Mammary epithelial cell (primary cell): ENCODE measurements at regions of chr12 and their contacts with region 1.

Region 1: GRCh38 chr12:68317047-68317667 is 15.0 kb downstream of the MDM1 start:
- DNase-seq: no peak
- H3K4me3 ChIP-seq: no peak overlapping the region
- H3K27ac ChIP-seq: no peak overlapping the region
- H3K4me1 ChIP-seq: no peaks in the 10 kb centered on the region
- H3K27me3 ChIP-seq: no peaks in the 10 kb centered on the region
- CTCF ChIP-seq: peak; percentile 55 to 57

Region 2: DNA sequence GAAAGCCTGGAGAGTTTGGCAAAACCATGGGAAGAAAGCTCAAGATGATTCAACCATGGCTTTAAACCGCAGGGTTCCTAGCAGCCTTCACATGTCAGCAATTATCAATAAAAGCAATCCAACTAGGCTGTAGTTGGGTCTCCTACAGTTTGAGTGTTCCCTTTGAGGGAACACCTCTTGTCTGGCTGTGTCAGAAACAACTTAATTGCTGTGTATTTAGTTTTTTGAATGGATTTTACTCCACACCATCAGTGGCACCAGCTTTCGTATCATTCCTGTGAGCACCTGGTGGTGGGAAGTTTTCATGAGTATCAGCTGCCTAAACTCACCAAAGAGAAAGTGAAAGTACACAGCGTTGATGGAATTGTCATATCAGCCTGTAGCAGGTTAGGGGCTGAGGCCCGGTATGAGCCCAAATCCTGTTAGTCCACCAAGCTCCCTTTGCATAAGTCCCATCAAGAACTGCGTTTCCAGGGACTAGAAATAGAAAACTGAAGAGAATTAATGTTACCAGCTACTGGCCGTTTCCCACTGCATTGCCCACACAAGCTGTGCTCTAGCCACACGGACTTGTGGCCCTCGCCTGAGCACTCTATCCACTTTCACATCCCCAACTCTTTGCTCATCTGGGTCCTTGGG is 80.6 kb before region 1 on chr12:
- CTCF ChIA-PET with region 1: no interaction called
- dilution Hi-C with region 1: no loop called
- in situ Hi-C with region 1: loop called in 1 of 2 experiments (anchors 5 kb)
- intact Hi-C with region 1: loop called (anchors 1 kb)
- DNase-seq: peak; percentile 40
- H3K4me3 ChIP-seq: no peak overlapping the region
- H3K27ac ChIP-seq: no peak overlapping the region
- H3K4me1 ChIP-seq: no peaks in the 10 kb centered on the region
- H3K27me3 ChIP-seq: no peaks in the 10 kb centered on the region
- CTCF ChIP-seq: no peak

Region 3: DNA sequence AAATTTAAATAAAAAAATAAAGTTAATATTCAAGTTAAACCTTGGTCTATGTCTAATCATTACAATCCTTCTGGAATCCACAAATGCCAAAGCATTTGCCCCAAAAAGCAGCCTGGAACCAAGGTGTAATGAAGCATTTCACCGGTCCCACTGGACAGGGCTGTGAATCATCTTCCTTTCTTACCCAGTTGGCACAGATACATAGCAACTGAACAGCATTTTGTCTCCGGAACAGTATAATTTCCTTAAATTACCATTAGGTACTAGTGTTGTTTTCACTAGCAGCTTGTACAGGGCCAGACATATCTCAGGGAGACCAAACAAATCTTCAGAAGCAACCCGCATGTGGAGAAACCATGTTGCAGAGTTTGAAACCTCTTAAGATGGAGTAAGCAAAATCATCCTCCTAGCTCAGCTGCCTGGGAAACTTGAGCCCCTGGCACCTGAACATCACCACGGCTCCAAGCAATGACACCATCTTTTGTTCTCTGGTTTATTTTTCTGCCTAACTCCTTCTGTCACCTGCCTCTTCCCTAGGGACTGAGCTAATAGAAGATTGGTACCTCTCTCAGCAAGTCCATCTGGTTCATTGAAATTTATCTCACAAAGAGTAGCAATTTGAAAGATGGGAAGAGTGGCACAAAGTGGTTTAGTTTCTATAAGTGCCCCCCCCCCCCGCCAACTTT is 32.9 kb after region 1 on chr12:
- CTCF ChIA-PET with region 1: no interaction called
- dilution Hi-C with region 1: no loop called
- in situ Hi-C with region 1: no loop called
- intact Hi-C with region 1: no loop called
- DNase-seq: no peak
- H3K4me3 ChIP-seq: no peak overlapping the region
- H3K27ac ChIP-seq: no peak overlapping the region
- H3K4me1 ChIP-seq: no peaks in the 10 kb centered on the region
- H3K27me3 ChIP-seq: peaks cover 2% of the 10 kb centered on the region
- CTCF ChIP-seq: no peak